ENCODE measurements at regions of chr6 and their contacts with region 1.

Region 1: DNA sequence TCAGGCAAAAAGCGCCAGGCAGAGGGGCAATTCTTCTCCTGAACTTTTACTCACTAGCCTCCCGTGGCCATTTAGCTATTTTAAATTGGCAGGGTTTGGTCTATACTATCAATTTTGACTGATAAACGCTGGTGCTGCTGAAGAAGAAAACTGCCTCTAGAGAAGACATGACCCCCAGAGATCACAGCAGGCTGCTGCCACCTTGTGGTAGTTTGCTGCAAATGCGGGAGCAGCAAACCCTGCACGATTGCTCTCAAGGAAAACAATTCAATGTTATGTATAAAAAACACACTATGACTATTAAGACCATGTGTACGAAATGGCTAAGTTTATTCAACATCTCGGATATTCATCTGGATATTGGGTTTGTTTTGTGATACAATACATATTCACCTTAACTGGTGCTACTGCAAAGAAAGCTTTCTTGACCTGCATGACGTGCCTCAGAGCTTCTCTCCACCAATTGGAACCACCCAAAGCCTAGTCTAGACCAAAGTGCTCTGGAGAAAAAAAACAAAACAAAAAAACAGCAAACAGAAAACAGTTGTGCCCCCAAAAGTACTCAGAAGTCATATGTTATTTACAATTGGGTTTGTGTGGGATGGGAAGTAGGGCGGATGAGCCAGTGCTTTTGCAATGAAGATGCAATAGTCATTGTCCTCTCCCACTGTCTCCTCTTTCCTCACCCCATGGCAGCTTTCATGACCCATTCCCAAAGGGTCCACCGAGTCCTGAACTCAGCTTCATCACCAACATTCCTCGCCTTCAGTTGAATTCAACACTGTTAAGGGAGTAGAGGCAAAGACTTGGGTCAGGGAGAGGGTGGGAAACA is 19.6 kb upstream of the IL17F start:
- DNase-seq: peak; percentile 64 to 87 (median 83)
- H3K4me3 ChIP-seq: no peak overlapping the region
- H3K27ac ChIP-seq: no peak overlapping the region
- H3K4me1 ChIP-seq: peaks cover 0 to 11% (median 4%) of the 10 kb centered on the region in 4 experiments
- H3K27me3 ChIP-seq: no peaks in the 10 kb centered on the region

Region 2: GRCh38 chr6:52098634-52099185 is 165.2 kb before region 1 on chr6:
- CTCF ChIA-PET with region 1: interaction called, 47 read pairs
- POLR2A ChIA-PET with region 1: no interaction called
- DNase-seq: peak in 2 of 3 donors; percentile 21 to 53
- H3K4me3 ChIP-seq: no peak overlapping the region
- H3K27ac ChIP-seq: no peak overlapping the region
- H3K4me1 ChIP-seq: no peaks in the 10 kb centered on the region
- H3K27me3 ChIP-seq: no peaks in the 10 kb centered on the region

Region 3: DNA sequence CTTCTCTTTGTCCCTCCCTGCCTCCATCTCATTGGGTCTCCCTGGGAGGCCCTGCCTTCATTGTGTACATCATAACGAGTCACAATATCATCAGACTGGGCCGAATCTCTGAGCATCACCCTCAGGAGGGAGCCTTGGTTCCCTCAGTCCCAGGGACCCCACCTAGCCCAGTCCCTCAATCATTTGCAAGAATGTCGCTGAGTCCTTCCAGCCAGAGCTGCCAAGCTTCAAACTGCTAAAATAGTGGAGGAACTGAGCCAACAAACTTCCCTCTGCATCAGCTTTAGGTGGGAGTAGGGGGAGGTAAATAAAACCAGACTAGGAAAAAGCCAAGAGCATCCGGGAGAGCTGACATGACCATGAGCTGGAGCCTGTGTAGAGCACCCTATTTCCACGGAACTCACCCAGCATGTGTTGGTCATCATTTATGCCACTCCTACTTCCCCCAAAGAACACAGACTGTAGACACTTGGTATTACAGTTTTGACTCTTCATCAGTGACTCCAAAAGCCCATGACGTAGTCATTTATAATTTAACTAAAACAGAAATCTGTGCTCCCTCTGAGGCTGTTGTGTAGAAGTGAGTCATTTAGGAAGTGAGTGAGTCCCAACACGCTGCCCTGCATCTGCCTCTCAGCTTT is 106.5 kb before region 1 on chr6:
- CTCF ChIA-PET with region 1: interaction called, 147 read pairs
- POLR2A ChIA-PET with region 1: no interaction called
- DNase-seq: peak in 2 of 3 donors; percentile 32 to 55
- H3K4me3 ChIP-seq: no peak overlapping the region
- H3K27ac ChIP-seq: no peak overlapping the region
- H3K4me1 ChIP-seq: peaks cover 5 to 34% (median 25%) of the 10 kb centered on the region in 4 experiments
- H3K27me3 ChIP-seq: no peaks in the 10 kb centered on the region

Region 4: GRCh38 chr6:52162940-52163908 is 100.7 kb before region 1 on chr6:
- CTCF ChIA-PET with region 1: interaction called, 147 read pairs
- POLR2A ChIA-PET with region 1: no interaction called
- DNase-seq: peak; percentile 61 to 78 (median 78)
- H3K4me3 ChIP-seq: no peak overlapping the region
- H3K27ac ChIP-seq: no peak overlapping the region
- H3K4me1 ChIP-seq: peaks cover 0 to 6% (median 2%) of the 10 kb centered on the region in 4 experiments
- H3K27me3 ChIP-seq: no peaks in the 10 kb centered on the region

Region 5: GRCh38 chr6:52176550-52176949 is 87.4 kb before region 1 on chr6:
- CTCF ChIA-PET with region 1: interaction called, 15 read pairs
- POLR2A ChIA-PET with region 1: no interaction called
- DNase-seq: no peak
- H3K4me3 ChIP-seq: no peak overlapping the region
- H3K27ac ChIP-seq: no peak overlapping the region
- H3K4me1 ChIP-seq: peaks cover 0 to 15% (median 5%) of the 10 kb centered on the region in 4 experiments
- H3K27me3 ChIP-seq: no peaks in the 10 kb centered on the region

Region 6: GRCh38 chr6:52233975-52234823 is 29.7 kb before region 1 on chr6:
- CTCF ChIA-PET with region 1: interaction called, 33 read pairs
- POLR2A ChIA-PET with region 1: no interaction called
- DNase-seq: peak; percentile 16 to 52 (median 45)
- H3K4me3 ChIP-seq: no peak overlapping the region
- H3K27ac ChIP-seq: no peak overlapping the region
- H3K4me1 ChIP-seq: peaks cover 0 to 3% (median 0%) of the 10 kb centered on the region in 4 experiments
- H3K27me3 ChIP-seq: no peaks in the 10 kb centered on the region

Region 7: GRCh38 chr6:52243282-52243893 is 20.5 kb before region 1 on chr6:
- CTCF ChIA-PET with region 1: interaction called, 12 read pairs
- POLR2A ChIA-PET with region 1: interaction called, 3 read pairs
- DNase-seq: no peak
- H3K4me3 ChIP-seq: no peak overlapping the region
- H3K27ac ChIP-seq: no peak overlapping the region
- H3K4me1 ChIP-seq: peaks cover 0 to 3% (median under 1%) of the 10 kb centered on the region in 4 experiments
- H3K27me3 ChIP-seq: no peaks in the 10 kb centered on the region

Region 8: DNA sequence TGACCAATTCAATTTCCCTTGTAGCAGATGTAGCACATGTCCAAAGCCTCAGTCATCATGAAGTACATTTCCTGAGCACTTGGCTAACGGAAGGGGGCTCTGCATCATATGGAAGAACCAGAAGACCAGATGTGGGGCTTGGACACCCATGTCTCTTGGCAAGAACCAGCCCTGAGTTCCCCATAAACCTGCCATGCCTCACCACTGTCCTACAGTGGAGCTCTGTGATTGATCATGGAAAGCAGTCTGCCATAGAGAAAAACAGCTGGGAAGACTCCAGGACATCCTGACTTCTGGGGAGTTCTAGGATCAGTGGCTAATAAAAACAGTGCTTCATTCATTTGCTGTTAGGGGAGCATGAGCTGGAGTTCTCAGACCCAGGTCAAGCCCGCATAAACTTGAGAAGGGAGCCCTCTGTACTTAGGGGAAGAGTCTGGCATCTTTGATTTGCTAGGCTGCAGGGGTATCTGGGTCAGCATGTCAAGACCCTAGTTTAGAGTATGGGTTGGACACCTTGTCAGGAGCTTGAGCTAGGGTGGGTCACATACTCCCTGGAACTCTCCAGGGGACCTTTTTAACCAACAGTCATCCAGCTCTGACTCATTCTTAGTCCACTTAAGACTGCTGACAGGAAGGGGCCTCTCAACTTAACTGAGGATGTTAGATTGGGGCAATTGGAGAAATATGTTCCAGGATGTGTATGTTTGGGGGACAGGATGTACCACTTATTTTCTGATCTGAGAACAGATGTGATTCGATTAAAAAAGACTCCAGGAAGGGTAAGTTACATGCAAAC is 339.3 kb after region 1 on chr6:
- CTCF ChIA-PET with region 1: no interaction called
- POLR2A ChIA-PET with region 1: no interaction called
- DNase-seq: peak; percentile 36 to 92 (median 83)
- H3K4me3 ChIP-seq: no peak overlapping the region
- H3K27ac ChIP-seq: no peak overlapping the region
- H3K4me1 ChIP-seq: peaks cover 0 to 15% (median 10%) of the 10 kb centered on the region in 4 experiments
- H3K27me3 ChIP-seq: no peaks in the 10 kb centered on the region

Measured in common myeloid progenitor, CD34-positive (primary cell).